ENCODE measurements at regions of chr1 and their contacts with region 1.

Region 1: DNA sequence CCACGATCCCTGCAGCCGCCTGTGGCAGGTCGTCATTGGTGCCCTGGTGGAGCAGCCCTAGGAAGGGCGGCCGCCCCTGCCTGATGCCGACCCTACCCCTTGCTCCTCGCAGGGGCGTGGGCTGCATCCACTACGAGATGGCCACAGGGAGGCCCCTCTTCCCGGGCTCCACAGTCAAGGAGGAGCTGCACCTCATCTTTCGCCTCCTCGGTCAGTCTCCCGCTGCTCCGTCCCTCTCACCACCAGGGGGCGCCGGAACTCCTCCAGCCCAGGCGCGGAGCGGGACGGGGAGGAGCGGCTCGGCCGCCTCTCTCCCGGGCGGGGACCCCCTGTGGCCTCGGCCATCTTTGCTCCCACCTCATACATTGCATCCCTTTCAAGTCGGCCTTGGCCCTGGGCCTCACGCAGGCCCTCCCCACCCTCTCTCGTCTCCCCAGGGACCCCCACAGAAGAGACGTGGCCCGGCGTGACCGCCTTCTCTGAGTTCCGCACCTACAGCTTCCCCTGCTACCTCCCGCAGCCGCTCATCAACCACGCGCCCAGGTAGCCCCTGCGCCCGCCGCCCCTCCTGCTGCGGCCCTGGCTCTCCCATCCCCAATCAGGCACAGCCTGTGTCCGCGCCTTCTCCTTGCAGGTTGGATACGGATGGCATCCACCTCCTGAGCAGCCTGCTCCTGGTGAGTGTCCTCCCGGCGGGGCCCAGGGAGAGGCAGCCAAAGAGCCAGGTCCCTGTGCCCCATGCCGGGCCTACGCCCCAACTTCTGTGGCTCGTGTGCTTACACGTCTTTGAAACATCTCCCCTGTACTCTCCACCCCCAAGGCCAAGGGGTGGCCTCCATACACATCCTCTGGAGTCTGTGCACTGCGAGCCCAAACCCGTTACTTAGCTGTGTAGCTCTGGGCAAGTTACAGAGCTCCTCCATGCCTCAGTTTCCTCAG is 24.7 kb downstream of the CDK18 start:
- DNase-seq: peak; percentile 90
- ATAC-seq: peak; percentile 92
- H3K4me3 Mint-ChIP-seq: peak overlapping the region; percentile 57
- H3K27ac Mint-ChIP-seq: no peak overlapping the region
- H3K4me1 Mint-ChIP-seq: peaks cover 5% of the 10 kb centered on the region
- H3K27me3 Mint-ChIP-seq: no peaks in the 10 kb centered on the region
- CTCF ChIP-seq: peak; percentile 98

Region 2: GRCh38 chr1:205568469-205569361 is 39.6 kb after region 1 on chr1:
- CTCF ChIA-PET with region 1: interaction called, 9 read pairs
- POLR2A ChIA-PET with region 1: no interaction called
- intact Hi-C with region 1: loop called (anchors 5 kb)
- DNase-seq: peak; percentile 25
- ATAC-seq: peak; percentile 60
- H3K4me3 Mint-ChIP-seq: peak overlapping the region; percentile 51
- H3K27ac Mint-ChIP-seq: no peak overlapping the region
- H3K4me1 Mint-ChIP-seq: peaks cover 2% of the 10 kb centered on the region
- H3K27me3 Mint-ChIP-seq: peaks cover 43% of the 10 kb centered on the region
- CTCF ChIP-seq: no peak

Region 3: GRCh38 chr1:205610036-205610435 is 80.9 kb after region 1 on chr1:
- CTCF ChIA-PET with region 1: no interaction called
- POLR2A ChIA-PET with region 1: no interaction called
- intact Hi-C with region 1: no loop called
- DNase-seq: no peak
- ATAC-seq: no peak
- H3K4me3 Mint-ChIP-seq: no peak overlapping the region
- H3K27ac Mint-ChIP-seq: peak overlapping the region; percentile 25
- H3K4me1 Mint-ChIP-seq: peaks cover 54% of the 10 kb centered on the region
- H3K27me3 Mint-ChIP-seq: no peaks in the 10 kb centered on the region
- CTCF ChIP-seq: no peak